Body of pancreas (tissue), 4 donors: ENCODE measurements at regions of chr22 and their contacts with region 1.

Region 1: GRCh38 chr22:40031766-40032470 is 37.2 kb downstream of the FAM83F start:
- DNase-seq: no peak
- ATAC-seq: no peak
- H3K4me3 ChIP-seq: no peak overlapping the region
- H3K27ac ChIP-seq: no peak overlapping the region
- H3K4me1 ChIP-seq: no peaks in the 10 kb centered on the region
- H3K27me3 ChIP-seq: no peaks in the 10 kb centered on the region
- CTCF ChIP-seq: no peak
- POLR2A ChIP-seq: no peak

Region 2: DNA sequence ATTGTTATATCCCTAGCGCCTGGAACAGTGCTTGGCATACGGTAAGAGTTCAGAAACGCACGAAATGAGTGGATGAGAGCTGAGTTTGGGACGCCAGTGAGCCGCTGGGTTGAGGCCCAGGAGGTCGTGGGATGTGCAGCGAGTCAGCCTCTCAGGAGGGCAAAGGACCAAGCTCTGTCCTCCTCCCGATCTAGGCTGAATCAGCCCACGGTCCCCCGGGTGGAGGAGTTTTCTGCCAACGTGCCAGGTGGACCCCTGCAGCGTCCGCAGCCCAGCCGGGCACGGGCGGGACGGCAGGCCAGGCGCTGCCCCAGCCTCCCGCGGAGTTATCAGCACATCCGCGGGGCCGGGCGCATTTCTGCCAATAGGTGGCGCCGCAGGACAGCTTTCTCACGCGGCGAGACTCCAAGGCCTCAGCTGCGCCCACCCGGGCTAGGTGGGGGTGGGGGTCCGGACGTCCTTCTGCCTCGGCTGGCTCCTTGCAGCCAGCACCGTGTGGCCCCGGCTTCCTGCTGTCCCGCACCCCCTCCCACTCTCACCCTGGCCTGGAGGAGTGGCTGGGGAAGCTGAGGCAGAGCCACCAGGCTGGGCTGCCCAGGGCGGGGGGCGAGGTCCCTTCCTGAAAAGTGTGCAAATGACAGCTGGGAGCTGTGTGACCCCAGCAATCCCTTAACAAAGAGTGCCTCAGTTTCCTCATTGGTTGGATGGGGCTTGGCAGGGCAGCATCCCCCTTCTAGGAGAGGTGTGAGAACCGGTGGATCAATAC is 497.1 kb before region 1 on chr22:
- intact Hi-C with region 1: loop called (anchors 5 kb)
- DNase-seq: peak; percentile 86 to 93 (median 88)
- ATAC-seq: peak; percentile 28
- H3K4me3 ChIP-seq: no peak overlapping the region
- H3K27ac ChIP-seq: peak overlapping the region; percentile 19 to 65 (median 36)
- H3K4me1 ChIP-seq: peaks cover 34% of the 10 kb centered on the region
- H3K27me3 ChIP-seq: no peaks in the 10 kb centered on the region
- CTCF ChIP-seq: peak; percentile 84 to 97 (median 94)
- POLR2A ChIP-seq: peak in 2 of 3 donors; percentile 29 to 47